ENCODE measurements at regions of chr17 and their contacts with region 1.

Region 1: DNA sequence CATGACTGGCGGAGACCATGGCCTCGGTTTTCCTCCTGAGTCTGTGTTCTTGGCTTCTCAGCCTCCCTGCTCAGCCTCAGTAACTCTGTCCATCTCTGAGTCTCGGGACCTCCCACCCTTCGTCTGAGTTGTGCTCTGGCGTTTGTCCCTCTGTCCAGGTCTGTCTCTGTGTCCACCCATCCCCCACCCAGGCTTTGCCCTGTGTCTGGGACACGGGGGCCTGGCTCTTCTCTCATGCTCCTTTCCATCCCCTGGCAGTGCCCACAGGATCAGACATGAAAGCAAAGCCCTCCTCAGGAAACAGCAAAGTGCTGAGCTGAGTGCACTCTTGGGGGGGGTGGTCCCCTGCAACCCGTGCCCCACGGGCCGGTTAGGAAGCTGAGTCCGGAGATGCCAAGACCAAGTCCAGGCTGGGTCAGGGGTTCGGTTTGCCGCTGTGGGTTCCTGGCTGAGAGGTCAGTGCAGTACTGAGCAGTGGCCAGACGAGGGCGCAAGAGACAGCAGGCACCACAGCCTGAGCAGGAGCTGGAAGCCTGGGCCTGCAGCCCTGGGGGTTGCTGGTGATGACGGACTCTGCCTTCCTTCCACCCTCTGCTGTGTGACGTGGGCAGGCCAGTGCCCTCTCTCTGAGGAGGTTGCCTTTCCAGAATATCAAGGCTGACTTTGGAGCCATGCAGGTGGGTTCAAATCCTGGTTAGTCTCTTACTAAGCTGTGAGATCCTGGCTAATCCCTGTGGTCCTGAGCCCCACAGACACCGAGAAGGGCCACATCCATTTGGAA is 2.5 kb downstream of the P2RX1 start:
- DNase-seq: peak; percentile 70 to 89 (median 83)
- ATAC-seq: peak; percentile 47
- H3K4me3 ChIP-seq: no peak overlapping the region
- H3K4me3 Mint-ChIP-seq: no peak overlapping the region
- H3K27ac ChIP-seq: peak overlapping the region in 1 of 2 experiments; percentile 16
- H3K27ac Mint-ChIP-seq: peak overlapping the region; percentile 50
- H3K4me1 ChIP-seq: peaks cover 59% of the 10 kb centered on the region
- H3K4me1 Mint-ChIP-seq: peaks cover 65% of the 10 kb centered on the region
- H3K27me3 ChIP-seq: no peaks in the 10 kb centered on the region
- H3K27me3 Mint-ChIP-seq: no peaks in the 10 kb centered on the region
- CTCF ChIP-seq: peak; percentile 94

Region 2: GRCh38 chr17:3859940-3860339 is 53.8 kb before region 1 on chr17:
- CTCF ChIA-PET with region 1: interaction called, 14 read pairs
- POLR2A ChIA-PET with region 1: no interaction called
- intact Hi-C with region 1: loop called (anchors 5 kb)
- DNase-seq: no peak
- ATAC-seq: no peak
- H3K4me3 ChIP-seq: no peak overlapping the region
- H3K4me3 Mint-ChIP-seq: no peak overlapping the region
- H3K27ac ChIP-seq: no peak overlapping the region
- H3K27ac Mint-ChIP-seq: no peak overlapping the region
- H3K4me1 ChIP-seq: no peaks in the 10 kb centered on the region
- H3K4me1 Mint-ChIP-seq: no peaks in the 10 kb centered on the region
- H3K27me3 ChIP-seq: no peaks in the 10 kb centered on the region
- H3K27me3 Mint-ChIP-seq: no peaks in the 10 kb centered on the region
- CTCF ChIP-seq: no peak

Region 3: GRCh38 chr17:3893003-3893719 is 20.6 kb before region 1 on chr17 and contains the start of gene CAMKK1:
- CTCF ChIA-PET with region 1: interaction called, 16 read pairs
- POLR2A ChIA-PET with region 1: no interaction called
- intact Hi-C with region 1: loop called (anchors 1 kb)
- DNase-seq: peak; percentile 70 to 93 (median 88)
- ATAC-seq: peak; percentile 69
- H3K4me3 ChIP-seq: peak within 1 kb of the TSS; percentile 48 to 79
- H3K4me3 Mint-ChIP-seq: peak within 1 kb of the TSS; percentile 86
- H3K27ac ChIP-seq: peak within 1 kb of the TSS; percentile 33 to 35
- H3K27ac Mint-ChIP-seq: peak within 1 kb of the TSS; percentile 88
- H3K4me1 ChIP-seq: peaks cover 18% of the 10 kb centered on the region
- H3K4me1 Mint-ChIP-seq: peaks cover 20% of the 10 kb centered on the region
- H3K27me3 ChIP-seq: no peaks in the 10 kb centered on the region
- H3K27me3 Mint-ChIP-seq: no peaks in the 10 kb centered on the region
- CTCF ChIP-seq: no peak
- total RNA-seq, gene CAMKK1: 5.3 to 5.9 TPM

Region 4: GRCh38 chr17:3944485-3945388 is 31.0 kb after region 1 on chr17:
- CTCF ChIA-PET with region 1: interaction called, 17 read pairs
- POLR2A ChIA-PET with region 1: interaction called, 3 read pairs
- intact Hi-C with region 1: no loop called
- DNase-seq: peak in 6 of 9 experiments; percentile 39 to 60 (median 56)
- ATAC-seq: peak; percentile 93
- H3K4me3 ChIP-seq: no peak overlapping the region
- H3K4me3 Mint-ChIP-seq: no peak overlapping the region
- H3K27ac ChIP-seq: no peak overlapping the region
- H3K27ac Mint-ChIP-seq: no peak overlapping the region
- H3K4me1 ChIP-seq: no peaks in the 10 kb centered on the region
- H3K4me1 Mint-ChIP-seq: no peaks in the 10 kb centered on the region
- H3K27me3 ChIP-seq: no peaks in the 10 kb centered on the region
- H3K27me3 Mint-ChIP-seq: no peaks in the 10 kb centered on the region
- CTCF ChIP-seq: no peak

Region 5: GRCh38 chr17:4004517-4005295 is 91.0 kb after region 1 on chr17:
- CTCF ChIA-PET with region 1: interaction called, 181 read pairs
- POLR2A ChIA-PET with region 1: interaction called, 3 read pairs
- intact Hi-C with region 1: loop called (anchors 1 kb)
- DNase-seq: peak; percentile 16 to 79 (median 58)
- ATAC-seq: peak; percentile 94
- H3K4me3 ChIP-seq: no peak overlapping the region
- H3K4me3 Mint-ChIP-seq: no peak overlapping the region
- H3K27ac ChIP-seq: no peak overlapping the region
- H3K27ac Mint-ChIP-seq: no peak overlapping the region
- H3K4me1 ChIP-seq: peaks cover 4% of the 10 kb centered on the region
- H3K4me1 Mint-ChIP-seq: peaks cover 4% of the 10 kb centered on the region
- H3K27me3 ChIP-seq: no peaks in the 10 kb centered on the region
- H3K27me3 Mint-ChIP-seq: no peaks in the 10 kb centered on the region
- CTCF ChIP-seq: peak; percentile 98

Region 6: DNA sequence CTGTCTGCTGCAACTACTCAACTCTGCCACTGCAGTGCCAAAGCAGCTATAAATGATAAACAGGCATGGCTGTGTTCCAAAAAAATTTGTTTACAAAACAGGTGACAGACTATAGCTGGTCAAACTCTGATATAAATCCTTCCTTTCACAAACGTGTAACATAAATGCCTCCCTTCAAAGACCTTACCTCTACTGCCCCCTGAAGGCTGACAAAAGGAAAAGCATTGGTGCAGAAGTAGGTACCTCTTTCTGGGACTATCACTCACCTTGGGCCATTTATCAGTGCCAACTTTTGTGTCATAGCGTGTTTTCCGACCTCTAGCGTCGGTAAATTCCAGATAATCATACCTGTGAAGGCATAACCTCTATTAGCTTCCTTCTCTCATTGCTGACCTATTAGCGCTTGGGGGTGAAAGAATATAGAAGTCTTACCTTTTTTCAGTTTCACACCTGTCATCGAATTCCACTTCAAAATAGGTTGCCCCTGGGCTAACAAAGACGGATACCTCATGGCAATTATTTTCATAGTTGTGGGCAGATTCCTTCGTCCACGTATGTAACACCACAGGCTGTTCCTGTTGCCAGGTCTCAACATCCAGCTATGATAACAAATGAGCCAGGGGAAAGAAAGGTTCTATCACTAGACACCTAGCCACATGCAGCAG is 161.2 kb after region 1 on chr17:
- CTCF ChIA-PET with region 1: interaction called, 11 read pairs
- POLR2A ChIA-PET with region 1: no interaction called
- intact Hi-C with region 1: loop called (anchors 1 to 2 kb)
- DNase-seq: peak in 2 of 9 experiments; percentile 66 to 75
- ATAC-seq: peak; percentile 78
- H3K4me3 ChIP-seq: no peak overlapping the region
- H3K4me3 Mint-ChIP-seq: no peak overlapping the region
- H3K27ac ChIP-seq: no peak overlapping the region
- H3K27ac Mint-ChIP-seq: no peak overlapping the region
- H3K4me1 ChIP-seq: no peaks in the 10 kb centered on the region
- H3K4me1 Mint-ChIP-seq: no peaks in the 10 kb centered on the region
- H3K27me3 ChIP-seq: no peaks in the 10 kb centered on the region
- H3K27me3 Mint-ChIP-seq: no peaks in the 10 kb centered on the region
- CTCF ChIP-seq: peak; percentile 71

Measured in CD8-positive, alpha-beta T cell (primary cell).